ENCODE measurements at regions of chr2 and their contacts with region 1.

Region 1: GRCh38 chr2:157327621-157328500 is 2.2 kb upstream of the ERMN start:
- DNase-seq: peak; percentile 74
- H3K4me3 Mint-ChIP-seq: no peak overlapping the region
- H3K27ac Mint-ChIP-seq: no peak overlapping the region
- H3K4me1 Mint-ChIP-seq: peaks cover 8% of the 10 kb centered on the region
- H3K27me3 Mint-ChIP-seq: no peaks in the 10 kb centered on the region
- CTCF ChIP-seq: peak; percentile 88

Region 2: GRCh38 chr2:155377266-155377680 is 1950.6 kb before region 1 on chr2:
- CTCF ChIA-PET with region 1: interaction called, 3 read pairs
- POLR2A ChIA-PET with region 1: no interaction called
- intact Hi-C with region 1: loop called (anchors 10 kb)
- DNase-seq: peak; percentile 47
- H3K4me3 Mint-ChIP-seq: no peak overlapping the region
- H3K27ac Mint-ChIP-seq: no peak overlapping the region
- H3K4me1 Mint-ChIP-seq: no peaks in the 10 kb centered on the region
- H3K27me3 Mint-ChIP-seq: no peaks in the 10 kb centered on the region
- CTCF ChIP-seq: peak; percentile 41

Region 3: GRCh38 chr2:157312866-157313486 is 14.9 kb before region 1 on chr2:
- CTCF ChIA-PET with region 1: interaction called, 145 read pairs
- POLR2A ChIA-PET with region 1: no interaction called
- intact Hi-C with region 1: no loop called
- DNase-seq: no peak
- H3K4me3 Mint-ChIP-seq: no peak overlapping the region
- H3K27ac Mint-ChIP-seq: no peak overlapping the region
- H3K4me1 Mint-ChIP-seq: no peaks in the 10 kb centered on the region
- H3K27me3 Mint-ChIP-seq: no peaks in the 10 kb centered on the region
- CTCF ChIP-seq: no peak

Region 4: DNA sequence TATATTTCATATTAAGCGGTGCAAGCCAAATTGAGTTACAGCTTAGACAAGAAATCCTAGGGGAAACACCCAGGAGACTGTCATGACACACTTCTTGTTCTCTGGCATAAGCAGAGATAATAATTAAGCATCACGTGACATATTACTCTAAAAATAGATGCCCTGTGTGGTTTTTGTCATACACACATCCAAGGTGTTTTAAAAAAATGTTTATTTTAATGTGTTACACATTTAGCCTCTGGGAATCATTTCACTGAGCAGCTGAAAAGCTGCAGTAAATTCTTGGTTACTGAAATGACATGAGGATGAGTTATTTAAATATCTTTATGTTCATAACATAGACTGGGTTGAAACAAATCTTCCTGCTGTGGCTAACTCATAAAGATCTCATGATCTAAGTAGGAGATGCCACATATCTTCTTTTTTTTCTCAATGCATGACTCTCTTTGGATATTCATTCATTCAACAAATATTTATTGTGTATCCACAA is 35.8 kb after region 1 on chr2:
- CTCF ChIA-PET with region 1: interaction called, 11 read pairs
- POLR2A ChIA-PET with region 1: no interaction called
- intact Hi-C with region 1: no loop called
- DNase-seq: peak; percentile 4
- H3K4me3 Mint-ChIP-seq: no peak overlapping the region
- H3K27ac Mint-ChIP-seq: no peak overlapping the region
- H3K4me1 Mint-ChIP-seq: peaks cover 12% of the 10 kb centered on the region
- H3K27me3 Mint-ChIP-seq: no peaks in the 10 kb centered on the region
- CTCF ChIP-seq: no peak

Region 5: GRCh38 chr2:157596992-157597681 is 269.3 kb after region 1 on chr2:
- CTCF ChIA-PET with region 1: interaction called, 6 read pairs
- POLR2A ChIA-PET with region 1: no interaction called
- intact Hi-C with region 1: loop called (anchors 1 kb)
- DNase-seq: no peak
- H3K4me3 Mint-ChIP-seq: no peak overlapping the region
- H3K27ac Mint-ChIP-seq: no peak overlapping the region
- H3K4me1 Mint-ChIP-seq: no peaks in the 10 kb centered on the region
- H3K27me3 Mint-ChIP-seq: peaks cover 77% of the 10 kb centered on the region
- CTCF ChIP-seq: no peak

Region 6: GRCh38 chr2:157743051-157743450 is 415.2 kb after region 1 on chr2:
- CTCF ChIA-PET with region 1: no interaction called
- POLR2A ChIA-PET with region 1: no interaction called
- intact Hi-C with region 1: no loop called
- DNase-seq: no peak
- H3K4me3 Mint-ChIP-seq: no peak overlapping the region
- H3K27ac Mint-ChIP-seq: no peak overlapping the region
- H3K4me1 Mint-ChIP-seq: peaks cover 6% of the 10 kb centered on the region
- H3K27me3 Mint-ChIP-seq: no peaks in the 10 kb centered on the region
- CTCF ChIP-seq: no peak

Measured in MCF 10A (cell line).